ENCODE measurements at regions of chr19 and their contacts with region 1.

Region 1: DNA sequence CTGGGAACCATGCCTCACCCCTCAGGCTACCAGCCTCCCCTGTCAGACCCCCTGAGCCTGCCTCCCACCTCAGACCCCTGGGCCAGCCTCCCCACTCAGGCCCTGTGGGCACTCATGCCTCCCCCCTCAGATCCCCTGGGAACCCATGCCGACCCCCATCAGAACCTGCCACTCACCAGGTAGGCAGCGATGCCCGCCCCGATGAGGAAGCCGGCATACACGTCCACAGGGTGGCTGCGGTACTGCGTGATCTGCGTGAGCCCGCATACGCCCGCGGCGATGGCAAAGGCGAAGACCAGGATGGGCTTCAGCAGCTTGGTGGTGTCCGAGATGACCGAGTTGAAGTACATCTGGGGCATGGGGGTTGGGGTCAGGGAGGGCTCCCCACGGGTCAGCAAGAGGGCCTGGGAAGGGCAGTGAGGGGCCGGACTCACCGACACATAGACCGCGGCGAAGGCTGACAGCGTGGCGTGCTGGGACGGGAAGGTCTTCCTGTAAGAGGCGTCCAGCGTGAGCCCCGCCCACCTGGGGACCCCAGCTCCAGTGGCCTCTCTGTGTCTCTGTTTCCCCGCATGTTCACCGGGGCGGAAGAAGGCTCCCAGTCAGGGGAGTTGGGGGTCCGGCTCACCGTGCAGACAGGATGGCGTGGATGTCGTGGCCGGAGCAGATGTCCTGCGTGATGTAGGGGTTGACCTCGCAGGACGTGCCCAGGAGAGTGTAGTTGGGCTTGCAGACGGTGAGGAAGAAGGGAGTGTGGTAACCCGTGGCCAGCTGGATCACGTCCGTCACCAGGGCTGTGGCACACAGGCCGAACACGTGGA is 7.3 kb downstream of the PLPPR3 start:
- DNase-seq: no peak
- ATAC-seq: no peak
- H3K4me3 ChIP-seq: no peak overlapping the region
- H3K27ac ChIP-seq: no peak overlapping the region
- H3K4me1 ChIP-seq: peaks cover 0 to 42% of the 10 kb centered on the region in 2 experiments; a peak in 2 of 5 replicates
- H3K27me3 ChIP-seq: no peaks in the 10 kb centered on the region
- CTCF ChIP-seq: no peak
- EP300 ChIP-seq: no peak
- POLR2A ChIP-seq: 0 out of 2 replicates have a peak, but pooled peaks have one; percentile 33
- RAD21 ChIP-seq: no peak

Region 2: DNA sequence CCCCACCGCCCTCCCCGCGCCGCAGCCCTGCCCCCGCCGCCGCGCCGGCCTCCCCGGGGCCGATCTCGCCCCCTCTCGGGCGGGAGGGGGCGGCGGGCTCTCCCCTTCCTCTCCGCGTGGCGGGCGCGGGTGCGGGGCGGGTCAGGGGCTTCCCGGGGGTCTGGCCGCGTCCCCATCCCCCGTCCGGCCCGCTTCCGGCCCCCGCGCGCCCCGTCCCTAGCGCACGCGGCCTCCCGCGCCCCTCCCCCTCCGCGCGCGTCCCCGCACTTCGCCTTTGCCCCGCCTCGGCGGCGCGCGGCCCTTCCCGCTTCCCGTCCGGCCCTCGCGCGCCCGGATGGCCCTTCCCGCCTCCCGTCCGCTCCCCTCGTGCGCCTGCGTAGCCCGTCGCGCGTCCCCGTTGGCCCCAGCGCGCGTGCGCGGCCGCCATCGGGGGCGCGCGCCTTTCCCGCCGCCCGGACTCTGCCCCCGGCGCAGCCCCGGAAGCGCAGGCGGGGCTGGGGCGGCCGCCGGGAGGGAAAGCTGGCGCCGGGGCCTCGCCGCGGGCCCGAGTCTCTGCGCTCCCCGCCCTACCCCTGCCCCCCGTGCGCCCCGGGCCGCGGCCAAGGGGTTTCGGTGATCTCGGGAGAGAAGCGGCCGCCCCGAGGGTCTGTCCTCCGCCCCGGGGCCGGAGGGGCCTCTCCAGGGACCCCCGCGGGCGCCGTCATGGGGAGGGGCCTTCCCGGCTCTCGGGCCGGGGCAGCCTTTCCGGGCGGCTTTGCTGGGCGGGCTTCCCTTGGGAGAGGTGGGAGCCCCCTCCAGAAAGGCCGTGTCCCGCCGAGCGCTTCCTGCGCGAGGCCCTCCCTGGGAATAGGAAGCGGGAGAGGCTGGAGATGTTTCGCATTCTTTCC is 16.7 kb before region 1 on chr19:
- CTCF ChIA-PET with region 1: no interaction called
- POLR2A ChIA-PET with region 1: interaction called, 20 read pairs
- in situ Hi-C with region 1: no loop called
- intact Hi-C with region 1: no loop called
- DNase-seq: peak; percentile 88 to 97 (median 92)
- ATAC-seq: peak; percentile 20
- H3K4me3 ChIP-seq: peak overlapping the region; percentile 99
- H3K27ac ChIP-seq: peak overlapping the region; percentile 98
- H3K4me1 ChIP-seq: peaks cover 26 to 83% of the 10 kb centered on the region in 2 experiments
- H3K27me3 ChIP-seq: no peaks in the 10 kb centered on the region
- CTCF ChIP-seq: no peak
- EP300 ChIP-seq: no peak
- POLR2A ChIP-seq: no peak
- RAD21 ChIP-seq: no peak